Dorsolateral prefrontal cortex (tissue), 120 donors: ENCODE measurements at regions of chr5 and their contacts with region 1.

Region 1: DNA sequence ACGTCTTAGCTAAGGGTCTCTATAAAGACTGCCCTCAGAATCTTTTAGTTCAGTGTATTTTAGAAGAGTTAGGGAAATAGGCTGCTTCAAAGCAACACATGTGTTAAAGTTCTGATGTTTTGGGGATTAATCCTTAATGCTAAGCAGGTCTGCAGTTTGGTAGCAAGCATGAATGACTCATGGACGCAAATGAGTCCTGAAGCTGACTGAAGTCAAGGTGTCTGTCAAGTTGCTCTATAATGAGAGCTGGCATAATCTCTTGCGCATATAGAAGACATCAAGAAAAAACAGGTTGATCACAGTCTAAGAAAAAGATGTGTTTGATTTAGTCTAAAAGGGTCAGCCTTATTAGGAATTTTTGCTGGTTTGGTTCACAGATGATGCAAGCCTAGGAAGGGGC is 630.1 kb downstream of the CDH12 start:
- DNase-seq: no peak
- H3K4me3 ChIP-seq: no peak overlapping the region
- H3K27ac ChIP-seq: no peak overlapping the region
- H3K27me3 ChIP-seq: no peaks in the 10 kb centered on the region
- CTCF ChIP-seq: no peak

Region 2: GRCh38 chr5:21810737-21811316 is 412.3 kb before region 1 on chr5:
- intact Hi-C with region 1: loop called in 1 of 2 experiments (anchors 10 kb)
- DNase-seq: no peak
- H3K4me3 ChIP-seq: peak overlapping the region in 1 of 59 donors; percentile 12
- H3K27ac ChIP-seq: no peak overlapping the region
- H3K27me3 ChIP-seq: no peaks in the 10 kb centered on the region
- CTCF ChIP-seq: peak in 55 of 56 donors; percentile 28 to 76 (median 60)

Region 3: DNA sequence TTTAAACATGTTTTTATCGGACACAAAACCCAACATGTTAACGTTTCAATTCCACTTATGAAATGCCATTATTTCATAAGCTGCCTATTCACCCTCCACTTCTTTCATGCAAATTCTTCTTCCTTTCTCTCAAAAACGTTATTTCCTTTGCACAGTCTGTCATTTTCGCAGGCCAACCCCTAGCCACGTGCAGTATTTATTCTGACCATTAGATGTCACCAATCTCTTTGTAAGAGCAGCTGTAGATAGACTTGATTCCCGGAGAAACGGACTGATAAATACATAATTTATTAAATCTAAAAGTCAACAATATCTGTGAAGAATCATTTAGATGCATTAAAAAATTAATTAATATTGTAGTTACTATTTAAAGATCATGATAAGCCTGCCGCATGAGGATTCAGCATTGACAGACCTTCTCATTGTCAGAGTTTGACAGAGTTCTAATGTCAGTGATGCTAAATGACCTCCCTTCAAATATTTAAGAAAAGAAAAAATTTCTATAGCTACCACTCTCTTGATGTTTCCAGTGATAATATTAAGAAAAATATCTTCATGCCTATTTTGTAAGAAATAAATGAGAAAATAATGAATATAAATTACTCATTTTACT is 303.6 kb before region 1 on chr5:
- intact Hi-C with region 1: loop called in 1 of 2 experiments (anchors 10 kb)
- DNase-seq: peak in 2 of 10 donors; percentile 9 to 27
- H3K4me3 ChIP-seq: peak overlapping the region in 11 of 59 donors; percentile 7 to 39 (median 24)
- H3K27ac ChIP-seq: no peak overlapping the region
- H3K27me3 ChIP-seq: no peaks in the 10 kb centered on the region
- CTCF ChIP-seq: peak; percentile 47 to 79 (median 69)

Region 4: DNA sequence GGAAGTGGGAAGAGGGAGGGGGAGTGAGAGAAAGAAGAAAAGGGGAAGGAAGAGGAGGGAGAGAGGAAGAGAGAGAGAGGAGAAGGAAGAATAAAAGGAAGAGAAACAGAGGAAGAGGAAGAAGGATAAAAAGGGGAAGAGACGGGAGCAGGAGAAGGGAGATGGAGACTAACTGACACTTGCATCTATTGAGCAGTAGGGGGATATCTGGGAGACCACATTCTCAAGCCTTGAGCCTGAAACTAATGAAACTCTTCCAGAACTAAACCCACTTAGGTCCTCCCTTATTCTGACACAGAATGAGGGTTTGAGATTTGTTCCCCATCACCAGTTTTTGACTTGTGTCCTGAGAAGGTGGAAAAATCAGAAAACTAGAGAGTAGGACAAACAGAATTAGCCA is 96.7 kb after region 1 on chr5:
- intact Hi-C with region 1: no loop called
- DNase-seq: no peak
- H3K4me3 ChIP-seq: no peak overlapping the region
- H3K27ac ChIP-seq: no peak overlapping the region
- H3K27me3 ChIP-seq: no peaks in the 10 kb centered on the region
- CTCF ChIP-seq: no peak

Region 5: GRCh38 chr5:23367874-23368273 is 1144.8 kb after region 1 on chr5:
- intact Hi-C with region 1: no loop called
- DNase-seq: no peak
- H3K4me3 ChIP-seq: no peak overlapping the region
- H3K27ac ChIP-seq: no peak overlapping the region
- H3K27me3 ChIP-seq: no peaks in the 10 kb centered on the region
- CTCF ChIP-seq: no peak

Region 6: DNA sequence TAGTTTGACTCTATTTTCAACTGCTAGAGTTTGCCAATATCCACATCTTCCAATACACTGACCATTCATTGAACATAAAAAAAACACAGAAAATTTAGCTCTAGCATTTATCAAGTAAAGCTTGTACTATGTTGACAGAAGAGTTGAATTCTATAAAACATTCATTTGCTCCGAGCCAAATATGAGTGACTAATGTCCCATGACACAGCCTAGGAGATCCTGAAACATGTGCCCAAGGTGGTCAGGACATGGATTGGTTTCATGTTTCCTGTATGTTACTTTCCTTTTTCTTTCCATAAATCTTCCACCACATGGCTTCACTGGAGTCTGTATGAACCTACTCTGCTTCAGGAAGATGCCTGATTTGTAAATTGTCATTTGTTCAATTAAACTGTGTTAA is 1162.0 kb after region 1 on chr5:
- intact Hi-C with region 1: no loop called
- DNase-seq: no peak
- H3K4me3 ChIP-seq: no peak overlapping the region
- H3K27ac ChIP-seq: no peak overlapping the region
- H3K27me3 ChIP-seq: no peaks in the 10 kb centered on the region
- CTCF ChIP-seq: no peak